Naive thymus-derived CD8-positive, alpha-beta T cell (primary cell): ENCODE measurements at regions of chr12 and their contacts with region 1.

Region 1: GRCh38 chr12:92145731-92146496 is at the start of gene BTG1:
- DNase-seq: peak; percentile 87 to 100 (median 100)
- ATAC-seq: peak; percentile 68 to 72
- H3K4me3 Mint-ChIP-seq: peak within 1 kb of the TSS; percentile 89 to 100 (median 100)
- H3K27ac Mint-ChIP-seq: peak within 1 kb of the TSS; percentile 91 to 100 (median 99)
- H3K4me1 Mint-ChIP-seq: peaks cover 20 to 38% (median 30%) of the 10 kb centered on the region in 4 donors
- H3K27me3 Mint-ChIP-seq: peaks cover 0 to 4% (median 0%) of the 10 kb centered on the region in 5 donors
- polyA plus RNA-seq, gene BTG1: 705 to 889 (median 719) TPM

Region 2: DNA sequence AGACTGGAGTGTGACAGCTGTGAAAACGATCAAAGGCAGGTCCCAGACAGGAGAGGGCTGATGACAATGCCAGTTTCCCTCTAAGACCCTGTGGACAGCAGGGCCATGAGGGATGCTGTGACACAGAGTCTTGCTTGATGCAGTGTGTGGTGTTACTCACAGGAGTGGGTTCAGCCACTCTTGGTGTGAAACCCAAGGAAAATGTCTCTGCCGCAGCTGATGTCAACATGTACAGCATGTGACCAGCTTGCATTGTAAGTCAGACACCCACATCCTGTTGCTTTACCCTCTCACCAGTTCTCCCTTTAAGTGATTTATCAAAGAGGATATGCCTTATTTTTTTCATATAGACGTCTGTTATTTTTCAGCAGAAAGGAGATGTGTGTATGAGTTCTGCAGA is 268.9 kb before region 1 on chr12:
- POLR2A ChIA-PET with region 1: interaction called, 176 read pairs
- DNase-seq: peak; percentile 56 to 97 (median 89)
- ATAC-seq: peak; percentile 92
- H3K4me3 Mint-ChIP-seq: peak overlapping the region; percentile 72 to 90 (median 84)
- H3K27ac Mint-ChIP-seq: peak overlapping the region; percentile 96 to 100 (median 99)
- H3K4me1 Mint-ChIP-seq: peaks cover 38 to 76% (median 69%) of the 10 kb centered on the region in 4 donors
- H3K27me3 Mint-ChIP-seq: no peaks in the 10 kb centered on the region

Region 3: GRCh38 chr12:92028441-92028709 is 117.5 kb before region 1 on chr12:
- POLR2A ChIA-PET with region 1: interaction called, 283 read pairs
- DNase-seq: no peak
- ATAC-seq: no peak
- H3K4me3 Mint-ChIP-seq: peak overlapping the region in 7 of 10 donors; percentile 2 to 90 (median 80)
- H3K27ac Mint-ChIP-seq: peak overlapping the region; percentile 82 to 100 (median 98)
- H3K4me1 Mint-ChIP-seq: peaks cover 36 to 86% (median 74%) of the 10 kb centered on the region in 4 donors
- H3K27me3 Mint-ChIP-seq: no peaks in the 10 kb centered on the region

Region 4: DNA sequence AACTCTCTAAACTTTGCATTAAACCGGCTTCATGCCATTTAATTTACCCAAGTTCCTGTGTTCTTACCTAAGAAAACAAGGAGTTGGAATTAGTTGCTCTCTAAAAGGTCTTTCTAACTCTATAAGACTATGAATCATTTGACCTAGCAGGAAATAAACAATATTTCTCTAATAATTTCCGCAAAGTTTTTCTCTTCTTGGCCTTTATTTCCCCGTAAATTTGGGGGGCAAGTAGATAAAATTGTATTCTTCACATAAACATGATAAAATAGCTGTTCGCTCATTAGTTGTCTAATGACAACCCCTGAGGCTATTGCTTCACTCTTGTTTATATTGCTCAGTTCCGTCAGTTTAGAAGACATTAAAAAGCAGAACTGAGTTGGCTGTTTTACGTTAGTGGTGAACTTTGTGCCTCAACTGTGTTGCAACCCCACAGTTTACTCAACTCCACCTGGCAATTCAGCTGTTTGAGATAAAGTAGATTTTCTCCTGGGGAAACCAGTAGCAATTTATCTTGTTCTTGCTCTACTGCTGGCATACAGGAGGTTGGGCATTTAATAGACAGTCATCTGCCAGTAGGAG is 75.0 kb before region 1 on chr12:
- POLR2A ChIA-PET with region 1: no interaction called
- DNase-seq: no peak
- ATAC-seq: no peak
- H3K4me3 Mint-ChIP-seq: no peak overlapping the region
- H3K27ac Mint-ChIP-seq: peak overlapping the region in 1 of 10 donors; percentile 19
- H3K4me1 Mint-ChIP-seq: peaks cover 15 to 44% (median 31%) of the 10 kb centered on the region in 4 donors
- H3K27me3 Mint-ChIP-seq: no peaks in the 10 kb centered on the region

Region 5: GRCh38 chr12:92123780-92124688 is 21.9 kb before region 1 on chr12:
- POLR2A ChIA-PET with region 1: interaction called, 171 read pairs
- DNase-seq: no peak
- ATAC-seq: peak in 1 of 2 donors; percentile 18
- H3K4me3 Mint-ChIP-seq: peak overlapping the region in 9 of 10 donors; percentile 22 to 79 (median 40)
- H3K27ac Mint-ChIP-seq: peak overlapping the region in 9 of 10 donors; percentile 10 to 91 (median 66)
- H3K4me1 Mint-ChIP-seq: peaks cover 21 to 69% (median 62%) of the 10 kb centered on the region in 4 donors
- H3K27me3 Mint-ChIP-seq: no peaks in the 10 kb centered on the region

Region 6: GRCh38 chr12:92234533-92234932 is 88.6 kb after region 1 on chr12:
- POLR2A ChIA-PET with region 1: interaction called, 38 read pairs
- DNase-seq: peak in 3 of 10 donors; percentile 29 to 71 (median 67)
- ATAC-seq: peak; percentile 77 to 87
- H3K4me3 Mint-ChIP-seq: peak overlapping the region in 8 of 10 donors; percentile 8 to 67 (median 42)
- H3K27ac Mint-ChIP-seq: peak overlapping the region; percentile 17 to 96 (median 69)
- H3K4me1 Mint-ChIP-seq: peaks cover 12 to 37% (median 29%) of the 10 kb centered on the region in 4 donors
- H3K27me3 Mint-ChIP-seq: no peaks in the 10 kb centered on the region

Region 7: DNA sequence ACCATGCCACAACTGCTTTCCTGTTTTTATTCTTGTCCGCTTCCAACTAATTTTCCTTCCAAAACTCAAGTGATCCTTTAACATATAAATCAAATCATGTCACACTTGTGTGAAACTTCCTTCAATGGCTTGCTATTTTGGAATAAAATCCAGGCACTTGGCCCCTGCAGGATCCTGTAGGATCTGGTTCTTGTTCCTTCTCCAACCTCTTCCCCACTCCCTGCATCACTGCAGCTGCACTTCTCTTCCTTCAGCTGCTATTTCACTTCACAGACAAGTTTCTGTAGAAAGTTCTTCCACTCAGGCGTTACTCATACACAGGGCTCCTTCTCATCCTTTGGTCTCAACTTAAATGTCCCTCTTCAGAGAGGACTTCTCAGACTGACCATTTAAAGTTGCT is 239.4 kb after region 1 on chr12:
- POLR2A ChIA-PET with region 1: interaction called, 17 read pairs
- DNase-seq: no peak
- ATAC-seq: no peak
- H3K4me3 Mint-ChIP-seq: no peak overlapping the region
- H3K27ac Mint-ChIP-seq: peak overlapping the region in 1 of 10 donors; percentile 22
- H3K4me1 Mint-ChIP-seq: peaks cover 31 to 64% (median 54%) of the 10 kb centered on the region in 4 donors
- H3K27me3 Mint-ChIP-seq: no peaks in the 10 kb centered on the region